ENCODE measurements at regions of chr4 and their contacts with region 1.

Region 1: DNA sequence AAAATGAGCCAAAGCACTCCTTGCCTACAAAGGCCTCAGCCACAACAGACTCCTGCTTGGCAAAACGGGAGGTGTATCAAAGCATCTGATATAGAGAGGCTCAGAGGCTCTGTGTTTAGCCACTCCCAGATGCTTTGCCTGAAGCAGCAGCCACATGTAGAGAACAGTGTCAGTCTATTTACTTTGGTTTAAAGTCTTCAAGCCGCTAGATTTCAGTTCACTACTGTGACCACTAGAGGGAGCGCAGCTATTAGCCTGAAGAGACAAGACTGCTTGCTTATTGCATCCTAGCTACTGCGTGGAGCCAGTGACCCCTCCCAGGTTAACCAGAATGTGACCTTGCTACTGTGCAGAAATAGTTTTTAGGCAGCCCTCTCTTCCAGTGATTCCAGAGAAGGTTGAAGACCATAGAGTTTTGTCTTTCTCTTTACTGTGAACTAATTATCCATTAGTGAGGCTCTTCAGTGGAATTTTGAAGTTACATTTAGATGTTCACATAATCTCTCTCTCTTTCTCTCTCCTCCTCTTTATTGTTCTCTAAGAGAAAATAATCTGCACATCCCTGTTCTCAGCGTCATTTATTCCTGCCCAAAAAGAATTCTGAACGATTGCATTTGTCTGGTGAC is 39.3 kb downstream of the BMP3 start:
- DNase-seq: no peak
- ATAC-seq: peak; percentile 87

Region 2: GRCh38 chr4:81351654-81352445 is 282.0 kb after region 1 on chr4:
- intact Hi-C with region 1: loop called (anchors 5 kb)
- DNase-seq: peak; percentile 65
- ATAC-seq: peak; percentile 71

Measured in Right ventricle myocardium superior (tissue), 1 donor.